Naive thymus-derived CD4-positive, alpha-beta T cell (primary cell): ENCODE measurements at regions of chr2 and their contacts with region 1.

Region 1: DNA sequence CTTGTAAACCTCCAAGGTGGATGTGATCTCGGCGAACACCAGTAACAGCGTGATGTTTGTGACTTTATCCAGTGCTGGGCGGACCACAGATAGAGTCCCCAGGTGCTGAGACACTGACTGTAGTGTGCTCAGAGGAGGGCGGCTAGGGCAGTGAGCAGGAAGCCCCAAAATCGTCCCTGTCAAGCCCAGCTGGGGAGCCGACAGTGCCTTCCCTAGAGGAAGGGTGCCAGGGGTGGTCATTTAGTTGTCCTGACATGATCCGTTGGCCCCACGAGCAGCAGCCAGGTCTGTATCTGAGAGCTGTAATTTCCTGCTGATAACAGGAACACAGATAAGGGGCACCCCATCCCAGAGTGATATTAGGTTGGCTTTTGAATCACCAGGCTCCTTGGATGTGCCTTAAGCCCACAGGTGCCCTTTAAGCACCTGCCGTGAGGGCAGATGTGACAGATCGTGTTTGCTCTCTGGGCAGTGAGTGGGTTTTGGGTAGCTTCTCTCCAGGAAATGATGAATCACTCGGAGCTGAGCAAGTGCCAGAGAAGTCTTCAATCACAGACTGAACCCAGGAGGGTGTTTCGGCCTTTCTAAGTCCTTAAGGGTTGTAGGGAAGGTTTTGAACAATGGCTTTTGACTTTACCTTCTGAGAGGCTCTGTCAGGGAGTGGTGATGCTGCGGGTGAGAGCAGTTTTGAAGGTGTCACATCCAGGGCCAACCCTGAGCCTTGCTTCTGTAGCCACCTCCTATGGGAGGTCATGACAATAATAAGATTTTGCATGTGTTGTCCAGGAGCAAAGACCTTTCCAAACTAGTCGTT is 7.7 kb downstream of the LPIN1 start:
- DNase-seq: peak in 7 of 9 donors; percentile 27 to 69 (median 36)
- ATAC-seq: peak; percentile 62
- H3K4me3 ChIP-seq: peak overlapping the region; percentile 37
- H3K4me3 Mint-ChIP-seq: peak overlapping the region; percentile 79 to 93 (median 82)
- H3K27ac ChIP-seq: peak overlapping the region; percentile 66
- H3K27ac Mint-ChIP-seq: peak overlapping the region; percentile 84 to 97 (median 94)
- H3K4me1 ChIP-seq: peaks cover 56 to 64% of the 10 kb centered on the region in 2 donors
- H3K4me1 Mint-ChIP-seq: peaks cover 58 to 93% (median 84%) of the 10 kb centered on the region in 7 donors
- H3K27me3 ChIP-seq: no peaks in the 10 kb centered on the region
- H3K27me3 Mint-ChIP-seq: no peaks in the 10 kb centered on the region

Region 2: DNA sequence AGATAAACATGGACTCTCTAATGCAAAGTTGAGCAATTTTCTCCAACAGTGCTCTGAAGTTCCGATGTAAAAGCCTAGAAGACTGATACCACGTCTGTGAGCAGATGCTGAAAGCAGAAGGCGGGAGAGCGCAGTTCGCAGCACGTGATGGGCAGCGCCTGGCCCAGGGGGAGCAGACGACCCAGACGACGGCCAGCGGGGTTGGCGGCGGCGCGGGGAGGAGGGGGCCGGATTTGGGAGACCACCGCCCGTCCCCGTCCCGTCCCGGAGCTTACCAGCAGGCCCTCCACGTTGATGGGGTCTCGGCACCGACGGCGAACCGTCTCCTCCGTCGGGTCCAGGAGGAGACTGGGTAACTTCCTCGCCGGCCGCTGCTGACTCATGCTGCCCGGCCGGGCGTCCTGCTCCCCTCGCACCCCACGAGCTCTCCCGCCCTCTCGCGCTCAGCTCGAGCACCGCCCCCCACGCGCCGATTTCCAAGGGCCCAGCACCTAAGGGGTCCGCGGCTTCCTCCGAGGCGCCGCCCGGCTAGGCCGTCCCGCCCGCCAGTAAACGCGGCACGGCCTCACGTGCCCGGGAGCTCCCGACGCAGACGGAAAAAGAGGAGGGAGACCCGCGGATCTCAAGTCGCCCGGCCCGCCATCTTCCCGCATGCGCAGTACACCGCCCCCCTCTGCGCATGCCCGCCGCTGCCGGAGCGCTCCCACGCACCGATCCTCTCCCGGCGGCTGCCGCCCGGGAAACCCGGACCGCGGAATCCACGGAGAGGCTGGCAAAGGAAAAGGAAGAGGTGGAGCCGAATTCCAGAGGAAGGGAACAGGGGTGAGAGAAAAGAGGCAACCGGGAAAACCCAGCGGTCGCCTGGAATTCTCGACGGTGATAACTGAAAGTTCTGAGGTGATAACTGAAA is 288.3 kb before region 1 on chr2 and contains the start of gene E2F6:
- CTCF ChIA-PET with region 1: no interaction called
- POLR2A ChIA-PET with region 1: no interaction called
- intact Hi-C with region 1: loop called in 1 of 2 experiments (anchors 5 kb)
- DNase-seq: peak; percentile 80 to 94 (median 87)
- ATAC-seq: peak; percentile 83
- H3K4me3 ChIP-seq: peak within 1 kb of the TSS; percentile 69
- H3K4me3 Mint-ChIP-seq: peak within 1 kb of the TSS; percentile 91 to 99 (median 98)
- H3K27ac ChIP-seq: peak within 1 kb of the TSS; percentile 73
- H3K27ac Mint-ChIP-seq: peak within 1 kb of the TSS; percentile 87 to 97 (median 93)
- H3K4me1 ChIP-seq: peaks cover 5 to 8% of the 10 kb centered on the region in 2 donors
- H3K4me1 Mint-ChIP-seq: peaks cover 27 to 49% (median 39%) of the 10 kb centered on the region in 7 donors
- H3K27me3 ChIP-seq: no peaks in the 10 kb centered on the region
- H3K27me3 Mint-ChIP-seq: peaks cover 0 to 2% (median 0%) of the 10 kb centered on the region in 5 donors
- total RNA-seq, gene E2F6: 6.2 to 11.6 (median 9.2) TPM

Region 3: GRCh38 chr2:11743846-11744553 is 10.1 kb before region 1 on chr2:
- CTCF ChIA-PET with region 1: interaction called, 5 read pairs
- POLR2A ChIA-PET with region 1: interaction called, 10 read pairs
- intact Hi-C with region 1: loop called (anchors 1 kb)
- DNase-seq: peak in 1 of 9 donors; percentile 80
- ATAC-seq: peak; percentile 64
- H3K4me3 ChIP-seq: peak overlapping the region; percentile 35
- H3K4me3 Mint-ChIP-seq: peak overlapping the region in 7 of 10 donors; percentile 38 to 81 (median 65)
- H3K27ac ChIP-seq: no peak overlapping the region
- H3K27ac Mint-ChIP-seq: peak overlapping the region in 4 of 9 donors; percentile 22 to 97 (median 62)
- H3K4me1 ChIP-seq: peaks cover 33 to 41% of the 10 kb centered on the region in 2 donors
- H3K4me1 Mint-ChIP-seq: peaks cover 18 to 50% (median 45%) of the 10 kb centered on the region in 7 donors
- H3K27me3 ChIP-seq: no peaks in the 10 kb centered on the region
- H3K27me3 Mint-ChIP-seq: no peaks in the 10 kb centered on the region